Activated naive CD8-positive, alpha-beta T cell treated with anti-CD3 and anti-CD28 coated beads, Interleukin-2, amount 10 ng/mL, durations not matched to agents 7 days and 5 days (primary cell): ENCODE measurements at regions of chr21 and their contacts with region 1.

Region 1: GRCh38 chr21:45551316-45551715 is 9.1 kb upstream of the SLC19A1 start:
- DNase-seq: peak; percentile 24
- ATAC-seq: peak; percentile 31
- H3K4me3 Mint-ChIP-seq: peak overlapping the region; percentile 85
- H3K27ac Mint-ChIP-seq: peak overlapping the region; percentile 99
- H3K4me1 Mint-ChIP-seq: peaks cover 28% of the 10 kb centered on the region
- H3K27me3 Mint-ChIP-seq: no peaks in the 10 kb centered on the region

Region 2: GRCh38 chr21:45482899-45483821 is 68.2 kb before region 1 on chr21:
- POLR2A ChIA-PET with region 1: interaction called, 14 read pairs
- DNase-seq: peak; percentile 71
- ATAC-seq: peak; percentile 68
- H3K4me3 Mint-ChIP-seq: peak overlapping the region; percentile 78
- H3K27ac Mint-ChIP-seq: peak overlapping the region; percentile 94
- H3K4me1 Mint-ChIP-seq: peaks cover 32% of the 10 kb centered on the region
- H3K27me3 Mint-ChIP-seq: no peaks in the 10 kb centered on the region